Activated CD4-positive, alpha-beta memory T cell treated with anti-CD3 and anti-CD28 coated beads for 36 hours (primary cell): ENCODE measurements at regions of chr7 and their contacts with region 1.

Region 1: GRCh38 chr7:37342688-37343471 is 105.8 kb downstream of the ELMO1 start:
- DNase-seq: peak; percentile 85
- H3K4me3 Mint-ChIP-seq: peak overlapping the region; percentile 96
- H3K27ac Mint-ChIP-seq: peak overlapping the region; percentile 94
- H3K4me1 Mint-ChIP-seq: peaks cover 79% of the 10 kb centered on the region
- H3K27me3 Mint-ChIP-seq: no peaks in the 10 kb centered on the region

Region 2: GRCh38 chr7:37284805-37285231 is 58.1 kb before region 1 on chr7:
- CTCF ChIA-PET with region 1: interaction called, 14 read pairs
- POLR2A ChIA-PET with region 1: no interaction called
- intact Hi-C with region 1: loop called (anchors 2 kb)
- DNase-seq: peak; percentile 57
- H3K4me3 Mint-ChIP-seq: no peak overlapping the region
- H3K27ac Mint-ChIP-seq: no peak overlapping the region
- H3K4me1 Mint-ChIP-seq: peaks cover 45% of the 10 kb centered on the region
- H3K27me3 Mint-ChIP-seq: no peaks in the 10 kb centered on the region

Region 3: GRCh38 chr7:37327288-37327687 is 15.6 kb before region 1 on chr7:
- CTCF ChIA-PET with region 1: interaction called, 6 read pairs
- POLR2A ChIA-PET with region 1: interaction called, 4 read pairs
- intact Hi-C with region 1: loop called (anchors 2 kb)
- DNase-seq: no peak
- H3K4me3 Mint-ChIP-seq: no peak overlapping the region
- H3K27ac Mint-ChIP-seq: no peak overlapping the region
- H3K4me1 Mint-ChIP-seq: peaks cover 52% of the 10 kb centered on the region
- H3K27me3 Mint-ChIP-seq: no peaks in the 10 kb centered on the region

Region 4: DNA sequence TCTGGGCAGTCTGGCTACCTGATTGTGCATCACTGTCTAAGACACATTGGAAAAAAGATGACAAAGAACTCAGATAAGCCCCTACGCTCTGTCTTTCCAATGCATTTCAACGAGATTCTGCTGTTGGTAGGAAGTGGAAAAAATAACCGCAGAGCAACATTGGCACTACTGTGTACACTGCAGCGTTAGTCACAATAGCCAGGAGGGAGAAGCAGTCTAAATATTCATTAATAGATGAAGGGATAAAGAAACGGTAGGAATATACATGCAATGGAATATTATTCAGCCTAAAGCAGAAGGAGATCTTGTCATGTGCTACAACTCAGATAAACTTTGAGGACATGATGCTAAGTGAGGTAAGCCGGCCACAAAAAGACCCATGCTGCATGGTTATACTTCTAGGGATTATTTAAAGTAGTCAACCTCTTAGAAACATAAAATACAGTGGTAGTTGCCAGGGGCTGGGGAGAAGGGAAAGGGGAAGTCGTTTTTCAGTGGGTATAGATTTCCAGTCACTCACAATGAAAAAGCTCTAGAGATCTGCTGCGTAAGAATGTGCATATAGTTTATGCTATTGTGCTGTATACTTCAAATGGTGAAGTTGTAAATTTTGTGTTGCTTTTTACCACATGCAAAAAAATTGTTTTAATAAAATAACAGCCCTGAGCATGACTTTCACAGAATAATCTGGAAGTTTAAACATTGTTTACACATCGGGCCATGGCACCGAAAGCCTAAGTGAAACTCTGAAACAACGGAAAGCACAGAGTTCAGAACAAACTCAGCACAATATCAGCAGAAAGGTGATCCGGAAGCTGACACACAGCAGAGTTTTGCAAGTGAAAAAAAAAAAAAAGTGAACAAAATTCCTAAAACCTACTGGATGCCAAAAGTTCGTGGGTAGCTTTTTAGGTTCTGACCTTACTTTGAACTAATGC is 65.7 kb after region 1 on chr7:
- CTCF ChIA-PET with region 1: interaction called, 4 read pairs
- POLR2A ChIA-PET with region 1: no interaction called
- intact Hi-C with region 1: loop called (anchors 1 kb)
- DNase-seq: peak; percentile 34
- H3K4me3 Mint-ChIP-seq: peak overlapping the region; percentile 70
- H3K27ac Mint-ChIP-seq: peak overlapping the region; percentile 96
- H3K4me1 Mint-ChIP-seq: peaks cover 86% of the 10 kb centered on the region
- H3K27me3 Mint-ChIP-seq: no peaks in the 10 kb centered on the region

Region 5: DNA sequence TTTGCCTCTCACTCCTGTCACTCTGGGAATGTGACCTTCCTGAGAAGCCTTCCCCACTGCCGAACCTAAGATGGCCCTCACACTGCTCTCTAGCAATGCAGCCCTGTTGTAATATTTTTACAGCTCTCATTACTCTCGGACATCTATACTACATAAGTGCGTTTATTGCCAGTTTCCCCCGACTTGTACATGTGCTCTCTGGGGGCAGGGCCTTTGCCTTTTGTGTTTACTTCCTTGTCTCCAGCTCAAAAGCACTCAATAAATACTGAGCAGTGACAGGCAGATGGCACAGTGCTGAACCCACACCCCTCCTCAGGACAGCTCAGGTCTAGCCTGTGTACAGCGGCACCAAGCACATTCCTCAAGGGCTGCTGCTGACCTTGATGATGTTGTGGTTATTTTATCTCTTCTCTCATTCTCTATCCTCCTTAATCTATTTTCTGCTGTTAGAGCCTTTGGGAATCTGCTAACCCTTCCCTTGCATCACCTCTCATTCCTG is 173.8 kb after region 1 on chr7:
- CTCF ChIA-PET with region 1: no interaction called
- POLR2A ChIA-PET with region 1: no interaction called
- intact Hi-C with region 1: no loop called
- DNase-seq: no peak
- H3K4me3 Mint-ChIP-seq: no peak overlapping the region
- H3K27ac Mint-ChIP-seq: no peak overlapping the region
- H3K4me1 Mint-ChIP-seq: no peaks in the 10 kb centered on the region
- H3K27me3 Mint-ChIP-seq: no peaks in the 10 kb centered on the region